ENCODE measurements at regions of chr2 and their contacts with region 1.

Region 1: DNA sequence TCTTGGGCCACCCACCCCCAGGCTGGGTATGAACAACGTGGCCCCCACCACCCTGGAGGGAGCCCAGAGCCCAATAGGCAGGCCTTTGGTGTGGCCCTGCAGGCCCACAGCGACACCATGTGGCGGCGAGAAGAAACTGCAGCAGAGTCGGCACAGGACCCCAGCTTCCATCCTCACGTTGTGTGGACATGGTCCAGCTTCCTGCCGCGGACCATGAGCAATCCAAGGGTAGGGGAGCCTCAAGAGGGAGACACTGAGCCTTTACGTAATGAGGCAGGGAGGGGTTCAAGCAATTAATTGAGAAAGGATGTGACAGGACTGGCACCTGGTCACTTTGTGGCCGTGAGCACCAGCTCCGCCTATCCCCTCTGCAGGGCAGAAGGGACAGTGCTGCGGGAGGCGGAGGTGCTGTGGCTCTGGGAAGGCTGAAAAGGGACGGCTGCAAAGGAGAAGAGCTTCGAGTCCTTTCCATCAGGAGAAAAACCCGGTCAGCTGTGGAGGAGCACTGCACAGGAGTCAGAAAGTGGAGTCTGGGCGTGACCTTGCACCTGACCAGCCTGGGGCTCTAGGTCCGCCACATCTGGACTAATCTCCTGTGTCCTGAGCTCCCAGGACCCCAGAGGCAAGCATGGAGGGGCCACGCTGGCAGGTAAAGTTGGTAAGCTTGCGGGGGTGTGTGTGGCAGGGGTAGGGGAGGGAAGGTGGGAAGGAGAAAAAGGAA is 44.8 kb downstream of the TMEM37 start:
- DNase-seq: peak in 1 of 2 donors; percentile 67
- H3K4me3 ChIP-seq: no peak overlapping the region
- H3K27ac ChIP-seq: no peak overlapping the region
- H3K4me1 ChIP-seq: peaks cover 0 to 7% (median 3%) of the 10 kb centered on the region in 4 donors
- H3K27me3 ChIP-seq: peaks cover 0 to 15% of the 10 kb centered on the region in 2 donors
- CTCF ChIP-seq: peak; percentile 83 to 95

Region 2: GRCh38 chr2:118548880-118549488 is 927.5 kb before region 1 on chr2:
- intact Hi-C with region 1: no loop called
- DNase-seq: no peak
- H3K4me3 ChIP-seq: no peak overlapping the region
- H3K27ac ChIP-seq: no peak overlapping the region
- H3K4me1 ChIP-seq: no peaks in the 10 kb centered on the region
- H3K27me3 ChIP-seq: no peaks in the 10 kb centered on the region
- CTCF ChIP-seq: no peak

Region 3: GRCh38 chr2:119407430-119408220 is 68.8 kb before region 1 on chr2:
- intact Hi-C with region 1: loop called (anchors 2 kb)
- DNase-seq: no peak
- H3K4me3 ChIP-seq: no peak overlapping the region
- H3K27ac ChIP-seq: no peak overlapping the region
- H3K4me1 ChIP-seq: no peaks in the 10 kb centered on the region
- H3K27me3 ChIP-seq: peaks cover 0 to 8% of the 10 kb centered on the region in 2 donors
- CTCF ChIP-seq: peak; percentile 70 to 84